ENCODE measurements at regions of chr11 and their contacts with region 1.

Region 1: GRCh38 chr11:122754553-122755322 is 83.6 kb upstream of the CRTAM start:
- DNase-seq: peak in 27 of 35 experiments; percentile 11 to 73 (median 29)
- ATAC-seq: peak in 3 of 4 experiments; percentile 53 to 71 (median 54)
- H3K4me3 ChIP-seq: no peak overlapping the region
- H3K4me3 Mint-ChIP-seq: no peak overlapping the region
- H3K27ac ChIP-seq: no peak overlapping the region
- H3K27ac Mint-ChIP-seq: peak overlapping the region; percentile 10 to 11
- H3K4me1 ChIP-seq: peaks cover 24 to 41% of the 10 kb centered on the region in 2 experiments
- H3K4me1 Mint-ChIP-seq: peaks cover 56 to 68% (median 65%) of the 10 kb centered on the region in 3 donors
- H3K27me3 ChIP-seq: no peaks in the 10 kb centered on the region
- H3K27me3 Mint-ChIP-seq: no peaks in the 10 kb centered on the region

Region 2: GRCh38 chr11:122628810-122629555 is 125.8 kb before region 1 on chr11:
- CTCF ChIA-PET with region 1: interaction called, 55 to 57 read pairs
- POLR2A ChIA-PET with region 1: interaction called in 1 of 2 experiments, 5 read pairs
- DNase-seq: peak; percentile 7 to 78 (median 62)
- ATAC-seq: peak; percentile 85 to 94 (median 90)
- H3K4me3 ChIP-seq: no peak overlapping the region
- H3K4me3 Mint-ChIP-seq: no peak overlapping the region
- H3K27ac ChIP-seq: no peak overlapping the region
- H3K27ac Mint-ChIP-seq: no peak overlapping the region
- H3K4me1 ChIP-seq: peaks cover 8 to 10% of the 10 kb centered on the region in 2 experiments
- H3K4me1 Mint-ChIP-seq: peaks cover 7 to 11% (median 7%) of the 10 kb centered on the region in 3 donors
- H3K27me3 ChIP-seq: no peaks in the 10 kb centered on the region
- H3K27me3 Mint-ChIP-seq: no peaks in the 10 kb centered on the region

Region 3: DNA sequence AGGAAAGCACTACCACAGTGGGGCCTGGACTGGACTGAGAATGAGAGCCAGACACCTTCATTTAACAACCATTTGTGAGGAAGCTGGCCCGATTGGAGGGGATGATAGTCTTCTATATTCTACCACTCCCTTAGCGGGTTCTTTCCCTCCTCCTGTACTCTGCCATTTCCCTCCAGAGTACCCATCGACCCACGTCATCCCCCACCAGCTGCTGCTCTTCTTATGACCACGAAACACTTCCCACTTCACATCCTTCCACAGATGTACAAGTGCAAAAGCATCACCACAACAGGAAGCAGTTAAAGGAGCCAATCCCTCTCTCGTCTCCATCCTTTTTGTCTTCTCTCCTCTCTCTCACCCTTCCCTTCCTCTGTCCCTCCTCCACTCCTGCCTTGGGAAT is 117.2 kb before region 1 on chr11:
- CTCF ChIA-PET with region 1: interaction called, 14 to 30 read pairs
- POLR2A ChIA-PET with region 1: interaction called in 1 of 2 experiments, 7 read pairs
- DNase-seq: peak in 26 of 35 experiments; percentile 8 to 63 (median 33)
- ATAC-seq: peak in 3 of 4 experiments; percentile 50 to 99 (median 53)
- H3K4me3 ChIP-seq: no peak overlapping the region
- H3K4me3 Mint-ChIP-seq: no peak overlapping the region
- H3K27ac ChIP-seq: no peak overlapping the region
- H3K27ac Mint-ChIP-seq: peak overlapping the region in 1 of 2 donors; percentile 71
- H3K4me1 ChIP-seq: peaks cover under 1 to 9% of the 10 kb centered on the region in 2 experiments
- H3K4me1 Mint-ChIP-seq: peaks cover 0 to 8% (median 7%) of the 10 kb centered on the region in 3 donors
- H3K27me3 ChIP-seq: no peaks in the 10 kb centered on the region
- H3K27me3 Mint-ChIP-seq: no peaks in the 10 kb centered on the region

Region 4: DNA sequence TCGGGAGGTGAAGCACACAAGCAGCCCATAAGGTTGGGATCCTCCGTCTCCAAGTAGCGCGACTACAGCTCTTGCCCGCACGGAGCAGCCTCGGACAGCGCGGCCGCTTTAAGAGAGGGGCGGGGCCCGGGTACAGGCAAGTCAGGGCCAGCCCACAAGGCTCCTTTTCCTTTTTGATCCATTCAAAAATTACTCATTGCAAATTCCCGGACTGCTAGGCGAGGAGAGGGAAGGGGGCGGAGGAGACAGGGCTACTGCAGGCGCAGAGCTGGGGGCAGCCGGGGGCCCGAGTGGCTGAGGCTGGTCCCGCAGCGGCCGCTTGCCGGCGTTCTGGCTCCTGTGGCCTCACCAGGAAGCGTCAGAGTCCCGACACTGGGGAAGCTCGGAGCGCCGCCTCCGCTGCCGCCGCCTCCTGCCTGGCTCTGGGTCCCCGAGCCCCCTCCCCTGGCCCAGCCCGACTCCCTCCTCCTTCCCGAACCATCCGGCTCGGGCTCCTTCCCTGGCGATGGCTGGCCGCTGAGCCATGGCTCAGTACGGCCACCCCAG is 99.1 kb before region 1 on chr11 and contains the start of gene UBASH3B:
- CTCF ChIA-PET with region 1: interaction called, 14 to 30 read pairs
- POLR2A ChIA-PET with region 1: interaction called in 1 of 2 experiments, 11 read pairs
- DNase-seq: peak in 34 of 35 experiments; percentile 28 to 66 (median 48)
- ATAC-seq: peak; percentile 77 to 80 (median 78)
- H3K4me3 ChIP-seq: peak within 1 kb of the TSS; percentile 85
- H3K4me3 Mint-ChIP-seq: peak within 1 kb of the TSS; percentile 93 to 97 (median 97)
- H3K27ac ChIP-seq: peak within 1 kb of the TSS; percentile 46
- H3K27ac Mint-ChIP-seq: peak within 1 kb of the TSS; percentile 92 to 94
- H3K4me1 ChIP-seq: peaks cover 4 to 35% of the 10 kb centered on the region in 2 experiments
- H3K4me1 Mint-ChIP-seq: peaks cover 44 to 52% (median 50%) of the 10 kb centered on the region in 3 donors
- H3K27me3 ChIP-seq: peaks cover 0 to 8% of the 10 kb centered on the region in 2 experiments
- H3K27me3 Mint-ChIP-seq: no peaks in the 10 kb centered on the region
- total RNA-seq, gene UBASH3B: 29.7 to 44.0 (median 36.8) TPM

Region 5: GRCh38 chr11:122743949-122744348 is 10.8 kb before region 1 on chr11:
- CTCF ChIA-PET with region 1: interaction called, 3 to 40 read pairs
- POLR2A ChIA-PET with region 1: interaction called in 1 of 2 experiments, 3 read pairs
- DNase-seq: peak; percentile 47 to 80 (median 61)
- ATAC-seq: peak; percentile 75 to 80 (median 78)
- H3K4me3 ChIP-seq: peak overlapping the region; percentile 35 to 58
- H3K4me3 Mint-ChIP-seq: no peak overlapping the region
- H3K27ac ChIP-seq: peak overlapping the region; percentile 84
- H3K27ac Mint-ChIP-seq: no peak overlapping the region
- H3K4me1 ChIP-seq: peaks cover 54 to 74% of the 10 kb centered on the region in 2 experiments
- H3K4me1 Mint-ChIP-seq: peaks cover 5 to 27% (median 25%) of the 10 kb centered on the region in 3 donors
- H3K27me3 ChIP-seq: no peaks in the 10 kb centered on the region
- H3K27me3 Mint-ChIP-seq: no peaks in the 10 kb centered on the region

Measured in T-cell (primary cell).